ENCODE measurements at regions of chr18 and their contacts with region 1.

Region 1: GRCh38 chr18:5879479-5879882 is 15.8 kb downstream of the TMEM200C start:
- DNase-seq: peak; percentile 39
- H3K4me3 ChIP-seq: peak overlapping the region in 1 of 2 experiments; percentile 7; a peak in 1 of 4 replicates
- H3K27ac ChIP-seq: no peak overlapping the region
- H3K4me1 ChIP-seq: no peaks in the 10 kb centered on the region
- H3K27me3 ChIP-seq: no peaks in the 10 kb centered on the region
- CTCF ChIP-seq: peak; percentile 85
- EP300 ChIP-seq: no peak
- RAD21 ChIP-seq: peak; percentile 86

Region 2: DNA sequence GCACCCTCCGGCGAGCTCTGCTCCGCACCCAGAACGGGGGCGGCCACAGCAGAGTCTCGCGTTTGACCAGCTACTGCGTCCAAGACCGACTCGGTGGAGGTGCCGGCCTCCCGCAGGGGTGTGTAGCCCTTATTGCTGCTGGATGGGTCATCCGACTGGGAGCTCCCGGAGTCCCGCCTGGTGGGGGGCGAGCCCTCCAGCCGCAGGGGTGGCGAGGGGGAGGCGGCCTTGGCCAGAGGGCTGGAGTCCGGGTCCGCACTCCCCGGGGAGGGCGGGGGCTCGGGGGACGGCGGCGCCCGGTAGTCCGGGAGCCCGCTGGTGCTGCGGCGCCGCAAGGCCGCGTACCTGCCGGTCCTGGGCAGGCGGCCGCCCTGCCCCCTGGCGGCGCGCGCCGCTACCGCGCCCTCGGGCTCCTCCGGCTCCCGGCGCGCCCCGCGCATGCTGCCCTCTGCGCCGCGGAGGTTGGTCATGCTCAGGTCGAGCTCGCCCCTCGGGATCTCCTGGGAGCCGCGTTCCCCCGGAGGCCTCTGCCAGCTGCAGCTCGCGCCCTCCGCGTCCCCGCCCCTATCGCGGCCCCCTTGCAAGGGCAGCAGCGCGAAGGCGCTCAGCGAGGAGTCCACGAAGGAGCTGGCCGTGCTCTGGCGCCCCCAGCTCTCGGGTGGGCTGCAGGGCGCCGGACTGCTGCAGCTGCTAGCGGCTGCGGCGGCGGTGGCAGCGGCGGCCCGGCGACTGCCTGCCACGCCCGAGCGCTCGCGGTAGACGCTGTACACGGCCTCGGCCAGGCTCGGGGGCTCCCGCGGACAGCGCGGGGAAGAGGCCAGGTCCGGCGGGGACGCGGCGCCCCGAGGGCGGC is 11.1 kb after region 1 on chr18:
- CTCF ChIA-PET with region 1: interaction called, 52 read pairs
- POLR2A ChIA-PET with region 1: no interaction called
- DNase-seq: peak; percentile 90
- H3K4me3 ChIP-seq: peak overlapping the region in 1 of 2 experiments; percentile 47; a peak in 2 of 4 replicates
- H3K27ac ChIP-seq: no peak overlapping the region
- H3K4me1 ChIP-seq: no peaks in the 10 kb centered on the region; a peak in 1 of 4 replicates
- H3K27me3 ChIP-seq: peaks cover 25% of the 10 kb centered on the region; the same call in 1 of the 2 replicates
- CTCF ChIP-seq: peak; percentile 24; the same call in 1 of the 2 replicates
- EP300 ChIP-seq: no peak
- RAD21 ChIP-seq: no peak

Region 3: GRCh38 chr18:6537475-6537874 is 658.0 kb after region 1 on chr18:
- CTCF ChIA-PET with region 1: interaction called, 23 read pairs
- POLR2A ChIA-PET with region 1: no interaction called
- DNase-seq: no peak
- H3K4me3 ChIP-seq: no peak overlapping the region
- H3K27ac ChIP-seq: no peak overlapping the region
- H3K4me1 ChIP-seq: no peaks in the 10 kb centered on the region; a peak in 1 of 4 replicates
- H3K27me3 ChIP-seq: no peaks in the 10 kb centered on the region
- CTCF ChIP-seq: no peak
- EP300 ChIP-seq: no peak
- RAD21 ChIP-seq: no peak

Region 4: GRCh38 chr18:6891788-6892187 is 1012.3 kb after region 1 on chr18:
- CTCF ChIA-PET with region 1: interaction called, 10 read pairs
- POLR2A ChIA-PET with region 1: no interaction called
- DNase-seq: no peak
- H3K4me3 ChIP-seq: no peak overlapping the region
- H3K27ac ChIP-seq: no peak overlapping the region
- H3K4me1 ChIP-seq: no peaks in the 10 kb centered on the region; a peak in 1 of 4 replicates
- H3K27me3 ChIP-seq: no peaks in the 10 kb centered on the region
- CTCF ChIP-seq: no peak
- EP300 ChIP-seq: no peak
- RAD21 ChIP-seq: no peak

Measured in SK-N-SH (cell line).